Dorsolateral prefrontal cortex (tissue), 120 donors: ENCODE measurements at regions of chr12 and their contacts with region 1.

Region 1: DNA sequence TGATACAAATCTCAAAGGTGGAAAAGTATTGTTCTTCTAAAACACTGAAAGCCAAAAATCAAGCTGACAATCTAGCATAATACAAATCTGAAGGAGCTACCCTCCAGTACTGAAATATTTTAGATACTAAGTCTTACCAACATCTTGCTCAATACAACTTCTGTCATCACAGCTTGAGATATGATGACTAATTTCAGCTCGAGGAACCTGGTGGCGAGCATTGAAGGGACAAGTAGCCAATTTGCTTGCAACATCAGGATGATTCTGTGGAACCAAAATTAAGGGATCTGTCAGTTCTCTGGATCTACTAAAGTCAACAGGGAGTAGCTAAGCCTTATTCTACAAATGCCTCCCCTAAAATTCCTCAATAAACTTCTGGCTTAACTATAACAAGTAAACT is 10.4 kb downstream of the GTSF1 start:
- DNase-seq: no peak
- H3K4me3 ChIP-seq: peak overlapping the region in 8 of 59 donors; percentile 1 to 32 (median 10)
- H3K27ac ChIP-seq: peak overlapping the region in 37 of 59 donors; percentile 4 to 81 (median 45)
- H3K27me3 ChIP-seq: peaks cover 0 to 11% (median 0%) of the 10 kb centered on the region in 45 donors
- CTCF ChIP-seq: no peak

Region 2: DNA sequence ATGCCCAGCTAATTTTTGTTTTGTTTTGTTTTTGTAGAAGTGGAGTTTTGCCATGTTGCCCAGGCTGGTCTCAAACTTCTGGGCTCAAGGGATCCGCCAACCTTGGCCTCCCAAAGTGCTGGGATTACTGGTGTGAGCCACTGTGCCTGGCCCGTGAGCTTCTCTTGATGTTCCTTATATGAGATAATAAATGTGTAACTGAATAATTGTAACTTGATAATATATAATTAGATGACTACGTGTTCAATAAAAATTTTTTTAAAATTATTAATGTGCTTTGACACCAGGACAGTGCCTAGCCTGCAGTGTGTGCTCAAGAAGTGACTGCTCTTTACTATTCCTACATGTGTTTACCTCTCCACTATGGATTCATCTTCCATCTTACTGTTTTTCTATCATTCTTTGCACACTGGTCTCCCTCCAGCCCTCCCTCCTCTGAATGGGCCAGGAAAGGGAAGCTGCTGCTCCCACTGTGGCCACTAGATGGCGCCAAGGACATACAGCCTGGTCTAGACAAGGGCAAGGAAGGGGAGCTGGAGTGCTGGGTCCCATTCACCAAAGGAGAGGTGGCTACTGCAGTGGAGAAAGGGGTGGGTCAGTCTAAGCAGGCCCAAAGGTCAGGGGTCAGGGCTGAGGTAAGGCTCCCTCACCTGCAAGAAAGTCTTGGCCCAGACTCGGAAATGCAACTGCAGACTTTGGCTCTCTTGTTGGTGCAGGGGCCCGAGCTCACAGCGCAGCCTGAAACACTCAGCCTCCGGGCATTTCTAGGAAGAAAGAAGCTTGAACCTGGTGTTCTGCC is 63.8 kb before region 1 on chr12:
- intact Hi-C with region 1: loop called in 1 of 2 experiments (anchors 5 kb)
- DNase-seq: peak; percentile 73 to 92 (median 85)
- H3K4me3 ChIP-seq: no peak overlapping the region
- H3K27ac ChIP-seq: no peak overlapping the region
- H3K27me3 ChIP-seq: no peaks in the 10 kb centered on the region
- CTCF ChIP-seq: peak; percentile 75 to 98 (median 96)

Region 3: DNA sequence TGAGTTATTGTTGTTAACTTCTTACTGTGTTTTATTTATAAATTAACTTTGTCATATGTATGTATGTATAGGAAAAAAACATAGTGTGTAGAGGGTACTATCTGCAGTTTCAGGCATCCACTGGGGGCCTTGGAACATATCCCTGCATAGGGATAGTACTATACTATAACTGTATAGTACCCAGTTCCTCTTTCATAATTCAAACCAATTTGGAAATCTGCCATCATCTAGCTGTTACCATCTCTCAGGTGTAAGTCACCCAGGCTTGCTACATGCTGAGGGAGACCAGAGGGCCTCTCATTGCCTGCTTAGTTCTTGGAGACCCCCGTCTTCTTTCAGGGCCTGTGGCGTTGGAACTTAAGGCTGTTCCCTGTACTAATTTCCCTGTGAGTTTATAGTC is 198.0 kb after region 1 on chr12:
- intact Hi-C with region 1: no loop called
- DNase-seq: no peak
- H3K4me3 ChIP-seq: no peak overlapping the region
- H3K27ac ChIP-seq: no peak overlapping the region
- H3K27me3 ChIP-seq: peaks cover 0 to 7% (median 0%) of the 10 kb centered on the region in 45 donors
- CTCF ChIP-seq: no peak